Dendritic cell treated with granulocyte-macrophage colony-stimulating factor and Interleukin-4, amounts not matched to agents 40 ng/mL and 50 ng/mL, for 4 days (primary cell): ENCODE measurements at regions of chr3 and their contacts with region 1.

Region 1: DNA sequence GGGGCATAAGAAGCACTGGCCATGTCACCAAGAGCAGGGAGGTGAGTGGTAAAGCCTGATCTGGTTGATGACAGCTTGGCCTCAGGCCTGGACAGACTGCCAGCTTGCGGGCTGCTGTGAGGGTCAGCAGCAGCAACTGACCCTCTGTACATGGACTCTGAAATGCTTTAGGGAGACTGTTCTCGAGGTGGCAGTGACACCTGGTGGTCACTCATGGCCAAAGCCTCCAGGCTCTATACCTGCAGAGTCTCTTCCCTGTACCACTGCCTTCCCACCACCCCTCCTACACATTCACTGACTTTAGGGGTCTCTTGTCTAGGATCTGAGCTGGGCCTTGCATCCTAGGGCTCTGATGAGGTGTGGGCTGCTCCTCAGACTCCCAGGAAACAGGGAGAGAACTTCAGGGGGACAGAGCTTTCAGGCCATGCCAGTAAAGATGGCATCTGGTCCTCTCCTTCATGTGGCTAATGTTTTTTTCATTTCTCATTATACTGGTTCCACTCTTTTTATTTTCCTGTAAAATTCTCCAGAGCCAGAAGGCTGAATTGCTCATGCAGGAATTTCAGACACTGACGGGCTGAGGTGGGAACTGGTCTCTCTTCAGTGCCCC is 17.2 kb upstream of the TIMP4 start:
- H3K4me3 Mint-ChIP-seq: no peak overlapping the region
- H3K27ac Mint-ChIP-seq: peak overlapping the region; percentile 3
- H3K4me1 Mint-ChIP-seq: peaks cover 67% of the 10 kb centered on the region
- H3K27me3 Mint-ChIP-seq: no peaks in the 10 kb centered on the region

Region 2: DNA sequence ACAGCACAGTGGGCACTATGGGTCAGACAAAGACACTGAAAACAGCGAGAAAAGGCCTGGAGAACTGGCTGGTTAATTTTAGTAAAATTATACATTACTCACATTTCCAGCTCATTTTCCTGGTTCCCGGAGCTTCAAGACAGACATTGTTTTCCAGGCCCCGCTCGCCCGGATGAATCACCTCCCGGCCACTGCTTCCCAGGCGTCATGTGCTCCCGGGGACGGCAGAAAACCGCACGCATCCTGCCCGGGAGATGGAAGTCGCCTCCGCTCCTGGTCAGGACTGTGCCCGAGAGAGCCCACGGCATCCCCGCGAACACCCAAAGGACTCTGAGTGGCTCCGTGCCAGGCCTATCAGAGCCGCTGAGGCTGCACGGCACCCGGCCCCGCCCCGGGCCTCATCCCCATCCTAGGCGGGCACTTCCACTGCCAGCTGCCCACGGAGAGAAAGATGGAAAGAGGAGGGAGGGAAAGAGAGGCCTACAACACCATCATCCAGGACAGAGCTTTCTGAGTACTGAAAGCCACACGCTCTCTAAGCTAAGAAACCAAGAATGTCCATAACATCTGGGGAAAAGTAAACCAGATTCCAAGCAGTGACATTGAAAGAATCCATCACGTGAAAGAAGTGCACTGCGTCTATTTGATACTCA is 607.3 kb before region 1 on chr3:
- intact Hi-C with region 1: no loop called
- H3K4me3 Mint-ChIP-seq: no peak overlapping the region
- H3K27ac Mint-ChIP-seq: no peak overlapping the region
- H3K4me1 Mint-ChIP-seq: peaks cover 18% of the 10 kb centered on the region
- H3K27me3 Mint-ChIP-seq: no peaks in the 10 kb centered on the region

Region 3: DNA sequence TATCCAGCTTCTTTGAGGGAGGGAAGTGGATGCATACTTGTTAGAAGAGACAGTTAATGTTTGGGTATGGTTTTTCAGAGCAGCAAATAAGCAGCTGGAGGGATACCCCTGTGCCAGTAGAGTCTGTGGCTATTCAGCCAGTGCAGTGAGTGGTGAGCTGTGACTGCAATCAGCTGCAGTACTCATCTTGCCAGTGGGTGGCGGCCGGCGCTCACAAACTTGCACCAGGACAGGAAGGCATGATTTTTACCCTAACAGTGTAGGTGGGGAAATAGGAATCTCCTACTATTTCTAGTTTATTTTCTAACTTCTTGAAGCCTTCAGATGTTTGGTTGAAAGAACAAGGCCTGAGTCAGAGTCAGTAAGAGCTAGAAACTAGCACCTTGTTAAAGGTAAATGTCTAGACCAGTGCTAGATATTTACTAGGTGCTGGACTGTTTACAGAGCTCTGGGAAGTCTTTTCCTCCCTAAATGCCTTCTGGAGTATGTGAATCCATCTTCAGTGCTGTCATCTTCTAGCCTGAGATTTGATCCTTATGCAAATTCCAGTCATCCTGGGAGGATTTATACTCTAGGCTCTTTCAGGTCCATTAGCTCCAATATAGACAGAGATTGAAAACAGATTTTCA is 40.8 kb before region 1 on chr3:
- intact Hi-C with region 1: loop called (anchors 1 kb)
- H3K4me3 Mint-ChIP-seq: no peak overlapping the region
- H3K27ac Mint-ChIP-seq: no peak overlapping the region
- H3K4me1 Mint-ChIP-seq: peaks cover 12% of the 10 kb centered on the region
- H3K27me3 Mint-ChIP-seq: peaks cover 21% of the 10 kb centered on the region